ENCODE measurements at regions of chr11 and their contacts with region 1.

Region 1: GRCh38 chr11:777288-778255 is at the start of gene GATD1:
- DNase-seq: peak; percentile 73
- ATAC-seq: peak; percentile 73
- H3K4me3 ChIP-seq: peak within 1 kb of the TSS; percentile 87 to 92 (median 90)
- H3K27ac ChIP-seq: peak within 1 kb of the TSS; percentile 75
- H3K4me1 ChIP-seq: peaks cover 41% of the 10 kb centered on the region
- H3K27me3 ChIP-seq: no peaks in the 10 kb centered on the region
- CTCF ChIP-seq: no peak
- EP300 ChIP-seq: 0 out of 4 replicates have a peak, but pooled peaks of 1 of the 2 experiments have one; percentile 9
- POLR2A ChIP-seq: peak in 1 of 2 experiments; percentile 57; a peak in 2 of 4 replicates
- RAD21 ChIP-seq: 0 out of 2 replicates have a peak, but pooled peaks have one; percentile 25
- total RNA-seq, gene GATD1: 35.8 and 60.5 TPM in 2 replicates

Region 2: GRCh38 chr11:798093-798713 is 20.6 kb after region 1 on chr11 and contains the start of gene SLC25A22:
- CTCF ChIA-PET with region 1: no interaction called
- POLR2A ChIA-PET with region 1: interaction called, 44 read pairs
- in situ Hi-C with region 1: no loop called
- intact Hi-C with region 1: no loop called
- DNase-seq: peak; percentile 49
- ATAC-seq: peak; percentile 52
- H3K4me3 ChIP-seq: peak within 1 kb of the TSS; percentile 70 to 97 (median 94)
- H3K27ac ChIP-seq: peak within 1 kb of the TSS; percentile 80
- H3K4me1 ChIP-seq: peaks cover 4% of the 10 kb centered on the region
- H3K27me3 ChIP-seq: no peaks in the 10 kb centered on the region; a peak in 1 of 5 replicates
- CTCF ChIP-seq: peak; percentile 78
- EP300 ChIP-seq: no peak
- POLR2A ChIP-seq: no peak
- RAD21 ChIP-seq: peak; percentile 87
- total RNA-seq, gene SLC25A22: 8.0 and 12.4 TPM in 2 replicates